ENCODE measurements at regions of chr2 and their contacts with region 1.

Region 1: DNA sequence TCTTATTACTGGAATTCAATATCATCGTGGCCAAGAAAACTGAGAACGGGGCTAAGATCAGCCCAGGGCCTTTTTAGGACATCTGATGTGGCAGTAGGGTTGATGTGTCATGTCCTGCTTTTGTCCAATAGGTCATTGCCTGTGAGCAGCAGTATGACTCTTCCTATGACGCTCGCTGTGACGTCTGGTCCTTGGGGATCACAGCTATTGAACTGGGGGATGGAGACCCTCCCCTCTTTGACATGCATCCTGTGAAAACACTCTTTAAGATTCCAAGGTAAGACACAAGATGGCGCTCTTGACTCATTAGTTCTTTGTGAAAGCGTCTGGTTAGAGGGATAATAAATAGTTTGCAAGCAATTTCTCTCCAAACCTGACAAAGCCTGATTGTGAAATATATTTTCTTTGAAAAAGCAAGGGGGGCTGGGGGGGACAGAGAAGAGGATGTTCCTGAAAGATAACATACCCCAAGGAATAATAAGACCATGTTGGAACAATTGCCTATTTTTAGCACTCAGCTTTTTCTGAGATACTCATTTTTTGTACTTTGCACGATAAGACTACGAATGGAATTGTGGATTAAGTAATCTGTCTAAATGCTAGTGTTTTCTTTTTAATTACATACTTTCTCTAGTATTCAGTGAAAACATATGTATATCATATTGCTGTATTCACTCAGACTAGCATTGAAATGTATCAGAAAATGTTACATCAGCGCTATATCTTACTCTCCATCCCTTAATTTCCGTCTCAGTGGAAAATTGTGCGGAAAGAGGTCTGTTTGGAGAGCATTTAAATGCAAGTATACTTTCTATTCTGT is 58.1 kb downstream of the MYO3B start:
- DNase-seq: peak; percentile 15
- ATAC-seq: peak; percentile 82
- H3K4me3 ChIP-seq: no peak overlapping the region
- H3K27ac ChIP-seq: no peak overlapping the region
- H3K4me1 ChIP-seq: no peaks in the 10 kb centered on the region
- H3K27me3 ChIP-seq: peaks cover 10% of the 10 kb centered on the region
- CTCF ChIP-seq: peak; percentile 75

Region 2: DNA sequence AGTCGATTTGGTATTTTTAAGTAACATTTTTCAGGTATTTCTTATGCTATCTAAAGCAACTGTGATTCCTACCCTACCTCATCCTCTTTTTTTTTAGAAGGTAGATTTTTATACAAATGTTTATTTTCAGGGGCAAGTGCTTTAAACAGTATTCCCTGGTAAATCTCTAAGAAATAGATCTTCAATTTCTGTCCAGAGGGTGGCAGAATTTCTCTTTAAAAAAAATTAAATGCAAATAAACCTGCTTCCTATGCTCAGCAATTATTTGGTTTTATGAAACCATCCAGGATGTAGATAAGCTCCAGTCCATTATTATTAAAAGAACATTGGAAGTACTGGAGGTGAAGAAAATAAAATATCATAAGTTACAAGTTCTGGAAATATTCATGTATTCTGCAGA is 133.8 kb after region 1 on chr2:
- CTCF ChIA-PET with region 1: no interaction called
- POLR2A ChIA-PET with region 1: no interaction called
- in situ Hi-C with region 1: no loop called
- intact Hi-C with region 1: loop called (anchors 5 kb)
- DNase-seq: no peak
- ATAC-seq: peak; percentile 63; the same call in 1 of the 2 replicates
- H3K4me3 ChIP-seq: no peak overlapping the region
- H3K27ac ChIP-seq: no peak overlapping the region
- H3K4me1 ChIP-seq: no peaks in the 10 kb centered on the region
- H3K27me3 ChIP-seq: peaks cover 35% of the 10 kb centered on the region
- CTCF ChIP-seq: peak; percentile 47; the same call in 1 of the 2 replicates

Region 3: GRCh38 chr2:170505631-170506275 is 269.7 kb after region 1 on chr2:
- CTCF ChIA-PET with region 1: no interaction called
- POLR2A ChIA-PET with region 1: no interaction called
- in situ Hi-C with region 1: no loop called
- intact Hi-C with region 1: no loop called
- DNase-seq: no peak
- ATAC-seq: no peak
- H3K4me3 ChIP-seq: no peak overlapping the region
- H3K27ac ChIP-seq: no peak overlapping the region
- H3K4me1 ChIP-seq: no peaks in the 10 kb centered on the region
- H3K27me3 ChIP-seq: 0 out of 2 replicates have a peak, but pooled peaks cover 7% of the 10 kb centered on the region
- CTCF ChIP-seq: no peak

Region 4: GRCh38 chr2:170806548-170806947 is 570.5 kb after region 1 on chr2:
- CTCF ChIA-PET with region 1: interaction called, 12 read pairs
- POLR2A ChIA-PET with region 1: no interaction called
- in situ Hi-C with region 1: no loop called
- intact Hi-C with region 1: no loop called
- DNase-seq: no peak
- ATAC-seq: no peak
- H3K4me3 ChIP-seq: no peak overlapping the region
- H3K27ac ChIP-seq: no peak overlapping the region
- H3K4me1 ChIP-seq: no peaks in the 10 kb centered on the region
- H3K27me3 ChIP-seq: no peaks in the 10 kb centered on the region
- CTCF ChIP-seq: no peak